ENCODE measurements at regions of chr11 and their contacts with region 1.

Region 1: GRCh38 chr11:65888163-65888814 is at the start of gene FIBP:
- DNase-seq: peak; percentile 91
- H3K4me3 Mint-ChIP-seq: peak within 1 kb of the TSS; percentile 98
- H3K27ac Mint-ChIP-seq: peak within 1 kb of the TSS; percentile 92
- H3K4me1 Mint-ChIP-seq: peaks cover 47% of the 10 kb centered on the region
- H3K27me3 Mint-ChIP-seq: no peaks in the 10 kb centered on the region
- total RNA-seq, gene FIBP: 95.4 and 99.8 TPM in 2 replicates

Region 2: DNA sequence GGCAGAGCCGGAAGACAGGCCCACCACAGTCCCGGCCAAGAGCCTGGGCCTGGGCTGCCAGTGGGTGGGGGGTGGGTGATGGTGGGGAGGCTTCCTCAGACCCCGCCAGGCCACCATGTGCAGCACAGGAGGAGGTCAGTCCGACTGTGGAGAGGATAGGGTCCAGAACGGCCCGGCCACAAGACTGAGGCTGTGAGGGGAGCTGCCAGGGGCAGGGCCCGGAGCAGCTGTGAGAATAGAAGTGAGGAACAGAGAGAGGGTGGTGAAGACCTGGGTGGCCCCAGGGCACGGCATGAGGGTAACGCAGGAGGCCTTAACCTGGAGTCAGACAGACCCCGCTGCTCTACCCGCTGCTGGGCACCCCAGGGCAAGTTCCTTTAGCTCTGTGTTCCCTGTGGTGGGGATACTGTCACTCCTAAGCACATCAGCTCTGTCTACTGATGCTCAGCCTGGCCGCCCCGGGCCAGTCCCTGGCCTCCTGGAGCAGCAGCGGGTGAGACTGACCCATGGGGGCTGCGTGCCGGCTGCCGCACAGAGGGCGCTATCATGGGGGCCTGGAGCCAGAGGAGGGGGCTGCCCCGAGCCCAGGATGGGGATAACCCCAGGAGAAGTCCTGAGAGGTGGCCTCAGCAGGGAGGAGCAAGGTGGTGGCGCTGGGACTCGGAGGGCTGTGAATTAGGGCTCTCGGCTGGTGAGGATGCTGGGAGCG is 1680.0 kb before region 1 on chr11:
- intact Hi-C with region 1: no loop called
- DNase-seq: no peak
- H3K4me3 Mint-ChIP-seq: peak overlapping the region; percentile 92
- H3K27ac Mint-ChIP-seq: peak overlapping the region; percentile 95
- H3K4me1 Mint-ChIP-seq: peaks cover 25% of the 10 kb centered on the region
- H3K27me3 Mint-ChIP-seq: no peaks in the 10 kb centered on the region

Region 3: GRCh38 chr11:65817835-65818742 is 70.2 kb before region 1 on chr11:
- intact Hi-C with region 1: no loop called
- DNase-seq: peak; percentile 87
- H3K4me3 Mint-ChIP-seq: peak overlapping the region; percentile 79
- H3K27ac Mint-ChIP-seq: peak overlapping the region; percentile 65
- H3K4me1 Mint-ChIP-seq: peaks cover 18% of the 10 kb centered on the region
- H3K27me3 Mint-ChIP-seq: no peaks in the 10 kb centered on the region

Region 4: DNA sequence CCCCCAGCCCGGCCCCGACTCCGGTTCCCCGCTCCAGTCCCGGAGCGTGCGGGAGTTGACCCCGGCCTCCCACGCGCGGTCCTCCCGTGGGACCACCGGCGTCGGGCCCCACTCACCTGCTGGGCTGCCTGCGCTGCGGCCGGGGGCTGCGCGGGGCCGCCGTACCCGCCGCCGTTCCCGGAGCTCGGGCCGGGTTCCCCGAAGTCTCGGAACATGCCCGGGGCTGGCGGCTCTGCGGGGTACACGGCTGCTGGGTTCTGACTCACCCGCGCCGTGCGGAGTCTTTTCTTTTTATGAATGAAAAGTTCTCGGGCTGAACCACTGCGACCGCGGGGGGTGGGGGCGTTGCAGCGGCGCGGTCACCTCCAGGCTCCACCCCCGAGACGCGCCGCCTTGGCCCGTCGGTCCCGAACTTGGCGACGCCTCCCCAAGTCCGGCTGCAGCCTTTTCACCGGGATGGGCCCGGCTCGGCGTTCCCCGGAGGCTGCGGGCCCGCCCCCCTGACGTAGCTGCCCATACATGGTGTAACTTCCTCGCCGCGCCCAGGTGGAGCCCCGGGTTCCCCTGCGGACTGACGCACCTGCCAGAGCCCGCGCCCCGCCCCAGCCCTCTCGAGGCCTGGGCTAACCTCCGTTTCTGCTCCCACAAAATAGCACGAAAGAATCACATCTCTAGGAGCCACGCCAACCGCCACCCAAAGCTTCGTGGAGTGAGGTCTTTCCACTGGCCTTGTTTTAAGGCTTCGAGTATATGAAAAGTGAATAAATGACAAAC is 12.0 kb after region 1 on chr11 and contains the start of gene FOSL1:
- intact Hi-C with region 1: loop called (anchors 1 kb)
- DNase-seq: peak; percentile 89
- H3K4me3 Mint-ChIP-seq: peak within 1 kb of the TSS; percentile 82
- H3K27ac Mint-ChIP-seq: peak within 1 kb of the TSS; percentile 74
- H3K4me1 Mint-ChIP-seq: peaks cover 33% of the 10 kb centered on the region
- H3K27me3 Mint-ChIP-seq: no peaks in the 10 kb centered on the region
- total RNA-seq, gene FOSL1: 24.0 and 25.9 TPM in 2 replicates

Region 5: GRCh38 chr11:65927904-65928397 is 39.7 kb after region 1 on chr11:
- intact Hi-C with region 1: loop called (anchors 5 kb)
- DNase-seq: peak; percentile 75
- H3K4me3 Mint-ChIP-seq: peak overlapping the region; percentile 65
- H3K27ac Mint-ChIP-seq: peak overlapping the region; percentile 89
- H3K4me1 Mint-ChIP-seq: peaks cover 31% of the 10 kb centered on the region
- H3K27me3 Mint-ChIP-seq: no peaks in the 10 kb centered on the region

Measured in activated T-helper 2 cell treated with anti-CD3 and anti-CD28 coated beads, Interferon-gamma antibody, Interleukin-2, Interleukin-4, amounts not matched to agents 10 μg/mL and 5 μg/mL and 100 μg/mL, durations not matched to agents 14 hours and 24 hours and 36 hours (primary cell).